BJ (cell line): ENCODE measurements at regions of chr3 and their contacts with region 1.

Region 1: GRCh38 chr3:12810013-12810780 is 13.7 kb downstream of the CAND2 start:
- DNase-seq: peak; percentile 30
- H3K4me3 ChIP-seq: peak overlapping the region; percentile 58
- H3K27me3 ChIP-seq: no peaks in the 10 kb centered on the region
- CTCF ChIP-seq: peak; percentile 65

Region 2: DNA sequence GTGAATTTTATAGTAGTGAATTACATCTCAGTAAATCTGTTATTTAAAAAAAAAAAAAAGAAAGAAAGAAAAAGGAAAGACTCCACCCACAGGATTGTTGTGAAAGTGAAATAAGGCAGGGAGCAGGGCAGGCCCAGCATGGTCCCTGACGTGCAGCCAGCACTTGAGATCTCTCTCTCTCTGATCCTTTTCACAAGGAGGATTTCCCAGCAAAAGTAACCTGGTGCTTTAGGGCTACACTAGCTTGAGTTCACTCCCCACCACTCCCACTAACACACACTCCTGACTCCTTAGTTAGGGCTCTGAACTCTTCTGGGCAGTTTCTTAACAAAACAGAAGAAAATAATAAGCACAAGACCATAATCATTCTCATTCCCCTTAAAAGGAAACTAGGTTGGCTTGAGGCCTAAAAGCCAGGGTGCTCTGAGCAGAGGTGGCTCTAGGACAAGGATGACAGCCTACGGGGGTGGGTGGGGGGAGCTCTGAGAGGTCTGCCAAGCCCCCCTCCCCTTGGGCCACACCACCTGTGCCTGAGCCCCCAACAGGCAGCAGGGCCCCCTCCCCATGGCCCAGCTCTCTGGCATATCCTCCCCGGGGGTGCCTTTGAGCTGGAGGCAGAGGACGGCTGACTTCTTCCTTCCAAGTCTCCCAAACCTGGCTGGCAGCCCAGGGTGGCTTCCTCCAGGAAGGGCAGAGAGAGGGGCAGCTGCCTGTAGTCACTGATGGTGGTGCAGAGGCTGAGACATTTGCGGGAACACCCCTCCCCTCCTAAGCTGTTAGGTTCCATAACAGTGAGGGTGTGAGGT is 52.0 kb before region 1 on chr3:
- CTCF ChIA-PET with region 1: interaction called, 4 read pairs
- POLR2A ChIA-PET with region 1: interaction called, 10 read pairs
- DNase-seq: peak; percentile 26
- H3K4me3 ChIP-seq: no peak overlapping the region
- H3K27me3 ChIP-seq: no peaks in the 10 kb centered on the region
- CTCF ChIP-seq: no peak

Region 3: DNA sequence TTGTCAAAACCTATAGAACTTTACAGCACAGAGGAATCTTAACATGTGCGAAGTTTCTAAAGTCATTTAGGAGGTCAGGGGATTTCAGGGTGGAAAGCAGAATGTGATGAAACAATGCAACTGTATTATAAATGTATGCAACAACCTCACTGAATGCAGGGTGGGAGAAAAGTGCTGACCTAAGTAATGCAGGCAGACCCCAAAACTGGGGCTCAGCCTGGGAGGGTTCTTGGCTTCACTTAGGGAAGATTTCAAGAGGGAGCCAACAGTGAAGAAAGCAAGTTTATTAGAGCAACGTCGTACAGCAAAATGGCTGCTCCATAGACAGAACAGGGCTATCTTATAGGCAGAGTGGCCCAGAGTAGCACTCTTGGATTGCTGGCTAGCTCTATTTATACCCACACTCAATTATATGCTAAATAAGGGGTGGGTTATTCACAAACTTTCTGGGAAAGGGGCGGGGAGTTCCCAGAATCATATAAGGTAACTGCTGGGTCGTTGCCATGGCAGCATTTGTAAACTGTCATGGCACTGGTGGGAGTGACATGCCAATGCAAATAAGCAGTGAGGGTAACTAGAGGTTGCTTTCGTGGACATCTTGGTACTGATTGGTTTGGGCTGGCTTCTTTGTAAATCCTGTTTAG is 27.9 kb before region 1 on chr3:
- CTCF ChIA-PET with region 1: interaction called, 42 read pairs
- POLR2A ChIA-PET with region 1: no interaction called
- DNase-seq: no peak
- H3K4me3 ChIP-seq: no peak overlapping the region
- H3K27me3 ChIP-seq: peaks cover 5% of the 10 kb centered on the region
- CTCF ChIP-seq: no peak

Region 4: DNA sequence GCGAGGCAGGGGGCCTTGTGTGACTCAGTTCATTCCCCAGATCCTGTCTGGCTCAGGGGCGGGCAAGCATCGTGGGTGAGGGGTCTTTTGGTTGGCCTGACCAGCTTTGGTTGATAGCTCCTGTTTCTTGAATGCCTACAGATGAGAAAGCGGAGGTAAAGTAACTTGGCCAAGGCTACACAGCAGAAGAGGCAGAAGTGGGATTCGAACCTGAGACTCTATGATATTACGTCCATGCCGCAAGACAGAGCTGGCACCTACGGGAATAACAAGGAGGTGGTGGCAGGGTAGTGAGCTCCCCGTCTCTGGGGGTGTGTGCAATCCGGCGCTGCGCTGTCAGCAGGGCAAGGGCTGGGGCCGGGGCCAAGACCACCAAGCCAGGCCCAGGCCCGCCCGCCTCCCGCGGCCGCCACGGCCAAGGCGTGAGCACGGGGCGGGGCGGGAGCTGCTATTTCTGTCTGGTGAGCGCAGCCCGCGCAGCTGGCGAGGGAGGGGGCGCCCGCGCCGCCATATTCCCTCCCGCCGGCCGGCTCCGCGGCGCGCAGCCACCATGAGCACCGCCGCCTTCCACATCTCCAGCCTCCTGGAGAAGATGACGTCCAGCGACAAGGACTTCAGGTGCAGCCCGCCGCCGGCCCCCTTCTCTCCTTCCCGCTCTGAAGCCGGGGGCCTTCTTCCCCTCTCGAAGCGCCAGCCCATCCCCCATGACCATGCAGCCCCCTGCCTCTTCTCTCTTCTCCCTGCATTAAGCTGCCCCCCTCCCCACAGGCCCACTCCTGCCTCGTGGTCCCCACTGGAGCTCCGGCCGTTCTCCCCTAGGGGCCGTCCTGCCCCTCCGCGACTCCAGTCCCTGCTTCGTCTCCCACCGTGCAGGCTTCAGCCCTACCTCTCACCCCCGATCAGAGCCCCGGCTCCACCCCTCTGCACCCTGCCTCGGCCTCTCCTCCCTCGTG is 13.8 kb before region 1 on chr3 and contains the start of gene CAND2:
- CTCF ChIA-PET with region 1: interaction called, 13 read pairs
- POLR2A ChIA-PET with region 1: interaction called, 4 read pairs
- DNase-seq: no peak
- H3K4me3 ChIP-seq: peak within 1 kb of the TSS; percentile 46
- H3K27me3 ChIP-seq: no peaks in the 10 kb centered on the region; the same call in 1 of the 2 replicates
- CTCF ChIP-seq: no peak
- polyA plus RNA-seq, gene CAND2: 1.3 and 2.3 TPM in 2 replicates

Region 5: GRCh38 chr3:12822725-12823373 is 12.7 kb after region 1 on chr3:
- CTCF ChIA-PET with region 1: interaction called, 17 read pairs
- POLR2A ChIA-PET with region 1: no interaction called
- DNase-seq: no peak
- H3K4me3 ChIP-seq: no peak overlapping the region
- H3K27me3 ChIP-seq: no peaks in the 10 kb centered on the region
- CTCF ChIP-seq: peak; percentile 45

Region 6: GRCh38 chr3:12830785-12831156 is 20.6 kb after region 1 on chr3:
- CTCF ChIA-PET with region 1: interaction called, 12 read pairs
- POLR2A ChIA-PET with region 1: no interaction called
- DNase-seq: no peak
- H3K4me3 ChIP-seq: no peak overlapping the region
- H3K27me3 ChIP-seq: no peaks in the 10 kb centered on the region
- CTCF ChIP-seq: no peak; the same call in none of the 2 replicates